Breast epithelium (tissue), 4 donors: ENCODE measurements at regions of chr12 and their contacts with region 1.

Region 1: DNA sequence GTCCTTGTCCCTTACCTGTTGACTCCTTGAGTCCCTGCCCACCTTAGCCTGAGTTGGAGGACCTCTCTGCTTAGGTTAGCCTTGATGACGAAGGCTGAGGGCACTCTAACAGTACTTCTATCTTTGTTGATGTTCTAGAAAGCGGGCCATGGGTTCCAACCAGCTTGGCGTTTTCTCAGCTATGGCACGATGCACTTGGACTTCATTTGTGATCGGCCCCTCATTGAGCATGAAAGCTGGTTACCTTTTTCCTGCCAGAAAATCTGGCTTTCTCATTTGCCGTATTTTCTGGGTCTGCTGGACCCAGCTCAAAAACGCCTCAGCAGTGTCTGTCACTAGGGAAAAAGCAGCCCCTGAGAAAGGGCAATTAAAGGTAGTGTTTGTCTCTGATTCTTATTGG is 290.8 kb downstream of the EMP1 start:
- DNase-seq: no peak
- H3K4me3 ChIP-seq: no peak overlapping the region
- H3K27ac ChIP-seq: no peak overlapping the region
- H3K4me1 ChIP-seq: no peaks in the 10 kb centered on the region
- H3K27me3 ChIP-seq: no peaks in the 10 kb centered on the region
- CTCF ChIP-seq: no peak
- POLR2A ChIP-seq: no peak

Region 2: GRCh38 chr12:13552830-13553229 is 65.5 kb after region 1 on chr12:
- intact Hi-C with region 1: loop called (anchors 2 kb)
- DNase-seq: no peak
- H3K4me3 ChIP-seq: no peak overlapping the region
- H3K27ac ChIP-seq: no peak overlapping the region
- H3K4me1 ChIP-seq: no peaks in the 10 kb centered on the region
- H3K27me3 ChIP-seq: no peaks in the 10 kb centered on the region
- CTCF ChIP-seq: no peak
- POLR2A ChIP-seq: no peak